HEK293 (cell line): ENCODE measurements at regions of chr11 and their contacts with region 1.

Region 1: DNA sequence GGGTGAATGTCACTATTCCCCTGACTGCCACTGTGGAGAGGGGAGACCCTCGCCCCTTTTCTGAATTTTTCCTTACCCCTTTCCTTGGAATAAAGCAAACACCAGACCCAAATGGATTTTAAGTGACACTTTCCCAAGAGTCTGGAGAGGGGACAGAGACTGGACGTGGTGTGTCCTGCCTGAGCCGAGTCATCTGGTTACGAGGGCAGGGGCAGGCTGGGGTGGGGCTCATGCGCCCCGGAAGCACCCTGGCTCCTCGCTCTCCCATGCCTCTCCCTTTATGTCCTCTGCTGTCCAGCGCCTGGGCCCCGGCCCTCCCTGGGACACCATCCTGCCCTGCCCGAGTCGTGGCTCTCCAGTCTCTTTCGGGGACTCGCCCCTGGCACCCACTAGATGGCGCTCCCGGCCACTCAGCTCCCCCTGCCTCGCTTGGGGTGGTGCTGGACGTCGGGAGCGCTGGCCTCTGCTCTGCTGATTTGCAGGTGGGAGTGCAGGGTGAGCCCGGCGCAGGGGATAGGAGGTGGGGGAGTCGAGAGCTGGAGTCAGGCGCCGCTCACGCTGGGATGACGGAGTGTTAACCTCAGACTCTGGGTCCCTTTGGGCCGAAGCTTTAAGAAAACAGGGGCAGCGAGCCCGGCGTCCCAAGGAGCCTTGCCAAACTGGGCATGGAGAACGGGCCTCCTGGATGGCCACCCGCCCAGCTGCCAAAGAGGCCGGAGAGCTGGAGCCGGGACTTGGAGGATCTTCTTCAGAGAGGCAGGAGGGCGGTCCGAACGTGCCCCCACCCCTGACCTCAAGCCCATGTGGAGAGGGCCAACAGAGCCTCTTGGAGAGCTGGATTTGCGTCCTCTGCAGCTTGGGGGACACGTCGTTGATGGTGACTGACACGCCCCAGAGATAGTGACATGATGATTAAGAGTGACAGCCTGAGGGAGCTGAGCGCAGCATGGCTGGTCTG is 89.9 kb downstream of the RPS6KA4 start:
- H3K4me3 ChIP-seq: peak overlapping the region; percentile 33
- H3K27ac ChIP-seq: no peak overlapping the region
- H3K4me1 ChIP-seq: peaks cover 3% of the 10 kb centered on the region; the same call in 1 of the 2 replicates
- CTCF ChIP-seq: peak; percentile 93

Region 2: GRCh38 chr11:64406221-64406946 is 42.5 kb before region 1 on chr11:
- CTCF ChIA-PET with region 1: interaction called, 16 read pairs
- POLR2A ChIA-PET with region 1: no interaction called
- H3K4me3 ChIP-seq: no peak overlapping the region
- H3K27ac ChIP-seq: no peak overlapping the region
- H3K4me1 ChIP-seq: no peaks in the 10 kb centered on the region
- CTCF ChIP-seq: no peak

Region 3: GRCh38 chr11:64430629-64431028 is 18.2 kb before region 1 on chr11:
- CTCF ChIA-PET with region 1: interaction called, 12 read pairs
- POLR2A ChIA-PET with region 1: no interaction called
- H3K4me3 ChIP-seq: no peak overlapping the region
- H3K27ac ChIP-seq: no peak overlapping the region
- H3K4me1 ChIP-seq: no peaks in the 10 kb centered on the region
- CTCF ChIP-seq: no peak

Region 4: GRCh38 chr11:64474680-64475079 is 25.8 kb after region 1 on chr11:
- CTCF ChIA-PET with region 1: interaction called, 13 read pairs
- POLR2A ChIA-PET with region 1: no interaction called
- H3K4me3 ChIP-seq: no peak overlapping the region
- H3K27ac ChIP-seq: no peak overlapping the region
- H3K4me1 ChIP-seq: no peaks in the 10 kb centered on the region
- CTCF ChIP-seq: no peak

Region 5: DNA sequence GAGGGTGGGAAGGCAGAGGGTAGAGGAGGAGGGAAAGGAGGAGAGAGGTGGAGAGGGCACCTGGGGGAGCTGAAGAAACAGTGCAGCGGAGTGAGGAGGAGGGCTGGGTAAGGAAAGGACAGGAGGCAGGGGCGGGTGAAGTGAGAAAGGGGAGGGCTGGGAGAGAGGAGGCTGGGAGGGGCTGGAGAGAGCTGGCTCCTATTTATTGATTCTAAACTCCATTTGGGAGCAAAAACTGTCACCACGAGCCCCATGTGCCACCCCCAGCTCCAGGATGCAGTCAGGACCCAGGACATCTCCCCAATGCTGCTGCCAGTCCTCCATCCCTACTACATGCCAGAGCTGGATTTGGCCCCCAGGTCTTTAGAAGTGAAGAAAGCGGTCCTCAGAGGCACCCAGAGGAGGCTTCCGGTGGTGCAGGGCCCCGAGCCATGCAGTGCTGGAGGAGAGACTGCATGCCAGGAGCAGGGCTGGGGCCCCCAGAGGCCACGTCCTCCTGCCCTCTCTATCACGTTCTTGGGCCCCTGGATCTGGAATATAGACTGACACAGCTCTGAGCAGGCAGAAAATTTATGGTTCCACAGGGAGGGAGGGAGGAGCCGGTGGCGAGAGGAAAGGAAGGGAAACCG is 195.9 kb after region 1 on chr11:
- CTCF ChIA-PET with region 1: interaction called, 81 read pairs
- POLR2A ChIA-PET with region 1: interaction called, 4 read pairs
- H3K4me3 ChIP-seq: no peak overlapping the region
- H3K27ac ChIP-seq: no peak overlapping the region
- H3K4me1 ChIP-seq: no peaks in the 10 kb centered on the region
- CTCF ChIP-seq: no peak

Region 6: DNA sequence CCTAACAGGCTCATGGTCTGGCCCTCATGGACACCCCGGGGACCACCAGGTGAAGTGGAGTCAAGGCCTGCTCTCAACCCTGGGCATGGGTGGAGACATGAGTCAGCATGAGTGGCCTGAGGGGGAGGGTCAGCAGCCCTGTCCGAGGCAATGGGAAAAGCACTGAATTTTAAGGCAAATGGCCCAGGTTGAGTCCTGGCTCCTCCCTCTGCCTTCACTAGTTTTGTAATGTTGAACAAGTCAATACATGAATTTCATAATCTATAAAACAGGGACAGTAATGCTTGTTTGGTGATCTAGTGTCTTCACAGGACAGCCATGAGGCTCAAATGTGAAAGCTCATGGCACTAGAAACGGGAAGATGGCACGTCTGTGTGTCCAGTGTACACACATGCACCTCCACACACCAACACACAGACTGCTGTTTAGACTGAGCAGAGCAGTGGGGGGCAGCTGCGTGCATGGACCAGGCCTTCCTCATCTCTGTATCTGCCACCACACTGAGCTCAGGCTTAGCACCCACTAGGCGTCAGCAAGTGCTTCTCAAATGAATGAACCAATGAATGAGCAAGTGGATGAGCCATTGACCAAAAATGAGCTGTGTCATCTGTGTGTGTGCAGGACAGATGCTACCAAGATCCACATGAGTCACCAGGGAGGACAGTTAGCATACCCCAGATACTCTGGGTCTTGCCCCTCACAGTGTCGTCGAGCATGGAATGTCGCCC is 210.7 kb after region 1 on chr11:
- CTCF ChIA-PET with region 1: interaction called, 14 read pairs
- POLR2A ChIA-PET with region 1: no interaction called
- H3K4me3 ChIP-seq: no peak overlapping the region
- H3K27ac ChIP-seq: no peak overlapping the region
- H3K4me1 ChIP-seq: no peaks in the 10 kb centered on the region
- CTCF ChIP-seq: no peak